Activated T-helper 1 cell treated with anti-CD3 and anti-CD28 coated beads, Interleukin-12 subunit alpha, Interleukin-12 subunit beta, Interleukin-2, Interleukin-4 antibody, amounts not matched to agents 30 ng/mL and 10 ng/mL and 1 ng/mL, durations not matched to agents 14 hours and 24 hours and 36 hours (primary cell): ENCODE measurements at regions of chr11 and their contacts with region 1.

Region 1: DNA sequence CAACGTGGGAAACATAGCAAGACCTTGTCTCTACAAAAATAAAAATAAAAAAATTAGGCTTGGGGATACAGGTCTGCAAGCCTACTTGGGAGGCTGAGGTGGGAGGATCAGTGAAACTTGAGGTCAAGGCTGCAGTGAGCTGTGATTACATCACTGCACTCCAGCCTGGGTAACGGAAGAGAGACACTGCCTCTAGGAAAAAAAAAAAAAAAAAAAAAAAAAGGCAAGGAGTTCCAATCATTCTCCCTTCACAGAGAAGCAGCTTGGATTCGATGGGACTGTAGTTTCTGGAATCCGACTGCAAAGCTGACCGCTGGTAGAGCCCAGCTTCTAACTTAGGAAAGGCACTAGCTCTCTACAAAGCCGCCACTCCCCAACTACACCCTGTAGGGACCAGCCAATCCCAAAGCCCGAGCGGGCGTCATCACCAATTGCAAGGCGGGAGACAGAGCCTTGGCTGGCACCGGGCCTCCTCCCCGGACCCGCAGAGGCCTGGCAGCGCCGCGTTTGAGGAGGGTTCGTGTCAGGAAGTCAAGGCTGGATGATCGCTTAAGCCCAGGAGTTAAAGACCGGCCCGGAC is 699 bp upstream of the DDB2 start:
- DNase-seq: peak; percentile 77
- H3K4me3 Mint-ChIP-seq: peak overlapping the region; percentile 96
- H3K27ac Mint-ChIP-seq: peak overlapping the region; percentile 100
- H3K4me1 Mint-ChIP-seq: peaks cover 45% of the 10 kb centered on the region
- H3K27me3 Mint-ChIP-seq: peaks cover 2% of the 10 kb centered on the region

Region 2: DNA sequence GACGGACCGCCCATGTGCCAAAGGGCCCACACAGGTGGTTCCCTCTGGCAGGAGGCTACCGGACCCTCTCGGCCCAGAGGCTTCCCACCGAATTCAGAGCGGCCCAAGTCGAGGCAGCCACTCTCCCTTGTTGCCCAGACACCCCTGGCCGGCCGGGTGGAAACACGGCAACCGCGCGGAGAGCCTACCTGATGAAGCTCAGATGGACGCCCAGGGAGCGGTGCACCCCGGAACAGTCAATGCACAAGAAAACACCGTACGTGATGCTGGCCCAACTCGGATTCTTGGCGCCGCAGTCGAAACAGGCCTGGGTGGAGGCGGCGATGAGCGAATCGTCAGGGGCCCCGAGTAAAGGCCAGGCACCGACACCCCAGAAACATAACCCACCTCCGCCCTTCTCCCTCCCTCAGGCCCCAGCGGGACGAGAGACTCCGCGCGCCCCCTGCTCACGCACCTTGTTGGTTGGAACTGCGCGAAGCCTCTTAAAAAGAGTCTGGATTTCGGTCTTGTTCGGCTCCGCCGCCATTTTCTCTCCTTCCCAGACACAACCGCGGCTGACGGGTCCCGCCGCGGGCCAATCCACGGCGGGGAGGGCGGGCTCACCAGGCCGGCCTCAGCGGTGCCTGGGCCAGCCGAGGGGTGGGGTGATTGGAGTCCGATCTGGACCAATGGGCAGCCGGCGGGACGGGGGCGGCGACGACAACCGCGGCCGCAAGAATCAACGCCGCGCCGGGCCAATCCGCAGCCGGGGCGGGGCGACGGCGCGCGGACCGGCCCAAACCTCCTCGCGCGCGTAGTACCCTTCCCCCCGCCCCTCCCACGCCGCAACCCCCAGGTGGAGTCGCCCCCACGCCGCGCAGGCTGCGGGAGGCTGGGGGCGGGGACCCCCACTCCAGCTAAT is 37.5 kb before region 1 on chr11 and contains the start of gene ARFGAP2:
- intact Hi-C with region 1: loop called (anchors 1 kb)
- DNase-seq: peak; percentile 96
- H3K4me3 Mint-ChIP-seq: peak within 1 kb of the TSS; percentile 97
- H3K27ac Mint-ChIP-seq: peak within 1 kb of the TSS; percentile 100
- H3K4me1 Mint-ChIP-seq: peaks cover 36% of the 10 kb centered on the region
- H3K27me3 Mint-ChIP-seq: no peaks in the 10 kb centered on the region
- total RNA-seq, gene ARFGAP2: 111 and 116 TPM in 2 replicates

Region 3: GRCh38 chr11:47225552-47226400 is 11.7 kb after region 1 on chr11:
- intact Hi-C with region 1: loop called (anchors 1 kb)
- DNase-seq: no peak
- H3K4me3 Mint-ChIP-seq: peak overlapping the region; percentile 38
- H3K27ac Mint-ChIP-seq: peak overlapping the region; percentile 64
- H3K4me1 Mint-ChIP-seq: peaks cover 27% of the 10 kb centered on the region
- H3K27me3 Mint-ChIP-seq: no peaks in the 10 kb centered on the region

Region 4: DNA sequence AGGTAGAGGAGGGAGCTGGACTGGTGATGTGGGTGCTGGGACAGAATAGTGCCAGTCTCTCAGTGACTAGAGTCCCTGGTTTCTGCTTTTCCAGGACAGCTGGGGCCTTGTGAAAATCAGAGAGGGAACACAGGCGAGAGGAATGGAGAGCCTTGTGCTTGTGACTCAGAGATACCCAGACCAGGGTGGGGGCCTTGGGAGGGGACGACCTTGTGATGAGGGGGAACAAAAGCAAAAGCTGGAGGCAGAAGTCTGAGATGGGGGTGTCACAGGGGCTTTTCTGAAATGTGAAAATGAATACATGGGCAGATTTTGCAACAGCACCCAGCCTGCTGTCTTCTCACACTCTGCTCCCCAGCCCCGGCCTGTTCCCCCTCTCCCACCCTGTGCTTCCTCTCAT is 40.3 kb after region 1 on chr11:
- intact Hi-C with region 1: no loop called
- DNase-seq: no peak
- H3K4me3 Mint-ChIP-seq: no peak overlapping the region
- H3K27ac Mint-ChIP-seq: peak overlapping the region; percentile 63
- H3K4me1 Mint-ChIP-seq: peaks cover 12% of the 10 kb centered on the region
- H3K27me3 Mint-ChIP-seq: no peaks in the 10 kb centered on the region

Region 5: GRCh38 chr11:47407746-47408590 is 193.9 kb after region 1 on chr11 and contains the start of gene SLC39A13:
- intact Hi-C with region 1: loop called (anchors 2 kb)
- DNase-seq: peak; percentile 93
- H3K4me3 Mint-ChIP-seq: peak within 1 kb of the TSS; percentile 94
- H3K27ac Mint-ChIP-seq: peak within 1 kb of the TSS; percentile 92
- H3K4me1 Mint-ChIP-seq: peaks cover 21% of the 10 kb centered on the region
- H3K27me3 Mint-ChIP-seq: no peaks in the 10 kb centered on the region
- total RNA-seq, gene SLC39A13: 15.5 and 16.2 TPM in 2 replicates